ENCODE measurements at regions of chr9 and their contacts with region 1.

Region 1: DNA sequence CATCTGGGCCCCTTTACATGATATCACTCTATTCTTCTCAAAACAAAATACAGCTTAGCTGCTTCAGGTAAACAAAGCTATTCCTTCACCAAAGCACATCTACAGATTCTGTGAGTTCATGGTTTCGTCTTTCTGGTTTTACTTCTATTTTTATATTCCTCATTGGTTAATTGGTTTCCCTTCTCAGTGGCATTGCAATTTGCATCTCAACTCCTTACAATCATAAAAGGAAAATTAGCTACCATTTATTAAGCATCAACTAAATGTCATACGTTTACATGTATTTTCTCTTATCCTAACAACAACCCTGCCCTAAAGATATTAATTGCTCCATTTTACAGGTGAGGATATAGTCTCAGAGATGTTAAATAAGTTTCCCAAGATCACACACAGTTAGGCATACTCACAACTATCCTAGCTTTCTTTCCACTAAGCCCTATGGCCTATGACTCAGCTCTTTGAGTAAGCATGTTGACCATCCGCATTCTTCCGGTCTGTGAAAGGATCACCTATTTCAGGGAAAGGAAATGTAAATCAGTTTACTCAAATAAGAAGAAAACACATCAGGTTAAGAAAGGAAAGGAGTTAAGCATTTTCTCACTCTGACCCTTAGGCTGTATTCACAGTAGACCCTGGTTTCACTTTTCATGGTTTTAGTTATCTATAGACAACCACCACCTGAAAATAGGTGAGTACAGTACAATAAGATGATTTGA is 146.1 kb downstream of the CAAP1 start:
- DNase-seq: no peak
- ATAC-seq: no peak
- H3K4me3 ChIP-seq: no peak overlapping the region
- H3K27ac ChIP-seq: no peak overlapping the region
- H3K4me1 ChIP-seq: no peaks in the 10 kb centered on the region
- H3K27me3 ChIP-seq: no peaks in the 10 kb centered on the region

Region 2: DNA sequence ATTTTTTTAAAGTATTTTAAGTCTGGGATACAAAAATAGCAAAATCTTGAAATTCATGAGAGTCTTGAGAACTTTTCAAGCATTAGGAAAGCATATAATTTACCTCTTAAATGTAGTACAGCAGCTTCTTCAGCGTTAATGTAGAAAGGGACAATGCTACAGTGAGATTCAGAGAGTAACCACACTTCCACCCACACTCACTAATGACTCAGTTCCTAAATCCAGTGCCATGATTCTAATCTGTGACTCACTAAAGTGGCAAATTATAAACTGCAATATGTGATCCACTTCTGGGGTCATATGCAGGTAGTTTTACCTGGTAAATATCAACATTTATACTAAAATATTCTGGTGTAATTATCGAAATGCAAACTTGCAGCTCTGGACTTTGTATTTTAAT is 633.8 kb before region 1 on chr9:
- intact Hi-C with region 1: no loop called
- DNase-seq: no peak
- ATAC-seq: no peak
- H3K4me3 ChIP-seq: no peak overlapping the region
- H3K27ac ChIP-seq: no peak overlapping the region
- H3K4me1 ChIP-seq: no peaks in the 10 kb centered on the region
- H3K27me3 ChIP-seq: no peaks in the 10 kb centered on the region

Region 3: DNA sequence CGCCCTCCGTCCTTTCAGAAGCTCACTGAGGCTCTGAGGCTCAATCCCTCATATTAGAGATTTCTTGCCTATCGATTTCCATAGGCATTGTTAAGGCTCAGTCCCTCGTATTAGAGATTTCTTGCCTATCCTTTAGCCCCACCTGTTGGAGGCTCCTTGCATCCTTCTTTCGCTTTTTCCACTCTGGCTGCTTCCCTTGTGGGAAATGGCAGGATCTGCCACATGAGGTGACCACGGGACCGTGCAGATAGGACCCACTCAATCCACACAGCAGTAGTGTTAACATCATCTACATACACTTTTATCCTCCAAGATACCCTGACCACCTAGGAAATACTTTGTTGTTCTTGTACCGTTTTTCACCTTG is 229.2 kb after region 1 on chr9:
- intact Hi-C with region 1: loop called (anchors 5 kb)
- DNase-seq: no peak
- ATAC-seq: no peak
- H3K4me3 ChIP-seq: no peak overlapping the region
- H3K27ac ChIP-seq: no peak overlapping the region
- H3K4me1 ChIP-seq: no peaks in the 10 kb centered on the region
- H3K27me3 ChIP-seq: no peaks in the 10 kb centered on the region

Region 4: GRCh38 chr9:27247756-27248155 is 501.2 kb after region 1 on chr9:
- intact Hi-C with region 1: no loop called
- DNase-seq: no peak
- ATAC-seq: no peak
- H3K4me3 ChIP-seq: no peak overlapping the region
- H3K27ac ChIP-seq: no peak overlapping the region
- H3K4me1 ChIP-seq: no peaks in the 10 kb centered on the region
- H3K27me3 ChIP-seq: no peaks in the 10 kb centered on the region